SK-N-SH (cell line): ENCODE measurements at regions of chr13 and their contacts with region 1.

Region 1: DNA sequence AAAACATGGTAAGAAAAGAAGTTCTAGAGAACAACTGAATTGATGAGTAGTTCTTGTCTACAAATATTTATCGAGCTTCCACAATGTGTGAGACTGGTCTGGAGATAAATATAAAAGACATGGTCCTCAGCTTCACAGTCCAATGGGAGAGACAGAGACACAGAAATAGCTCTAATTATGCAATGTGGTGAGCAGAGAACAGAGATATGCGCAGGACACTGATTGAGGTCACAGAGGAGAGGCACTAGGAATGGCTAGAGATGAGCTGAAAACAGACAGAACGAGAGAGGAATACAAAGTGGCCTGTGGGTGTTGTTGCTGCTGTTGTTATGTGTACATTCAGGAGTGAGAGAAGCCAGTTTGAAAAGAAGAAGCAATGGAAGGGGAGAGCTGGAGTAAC is 53.2 kb downstream of the GPALPP1 start:
- DNase-seq: no peak
- H3K4me3 ChIP-seq: no peak overlapping the region
- H3K27ac ChIP-seq: no peak overlapping the region
- H3K4me1 ChIP-seq: peaks cover 0 to 1% of the 10 kb centered on the region in 2 experiments; a peak in 1 of 4 replicates
- H3K27me3 ChIP-seq: no peaks in the 10 kb centered on the region
- CTCF ChIP-seq: no peak
- EP300 ChIP-seq: no peak
- RAD21 ChIP-seq: no peak

Region 2: GRCh38 chr13:45074721-45075120 is 32.2 kb after region 1 on chr13:
- CTCF ChIA-PET with region 1: no interaction called
- POLR2A ChIA-PET with region 1: no interaction called
- DNase-seq: no peak
- H3K4me3 ChIP-seq: no peak overlapping the region
- H3K27ac ChIP-seq: no peak overlapping the region
- H3K4me1 ChIP-seq: no peaks in the 10 kb centered on the region; a peak in 1 of 4 replicates
- H3K27me3 ChIP-seq: no peaks in the 10 kb centered on the region
- CTCF ChIP-seq: no peak
- EP300 ChIP-seq: no peak
- RAD21 ChIP-seq: no peak

Region 3: DNA sequence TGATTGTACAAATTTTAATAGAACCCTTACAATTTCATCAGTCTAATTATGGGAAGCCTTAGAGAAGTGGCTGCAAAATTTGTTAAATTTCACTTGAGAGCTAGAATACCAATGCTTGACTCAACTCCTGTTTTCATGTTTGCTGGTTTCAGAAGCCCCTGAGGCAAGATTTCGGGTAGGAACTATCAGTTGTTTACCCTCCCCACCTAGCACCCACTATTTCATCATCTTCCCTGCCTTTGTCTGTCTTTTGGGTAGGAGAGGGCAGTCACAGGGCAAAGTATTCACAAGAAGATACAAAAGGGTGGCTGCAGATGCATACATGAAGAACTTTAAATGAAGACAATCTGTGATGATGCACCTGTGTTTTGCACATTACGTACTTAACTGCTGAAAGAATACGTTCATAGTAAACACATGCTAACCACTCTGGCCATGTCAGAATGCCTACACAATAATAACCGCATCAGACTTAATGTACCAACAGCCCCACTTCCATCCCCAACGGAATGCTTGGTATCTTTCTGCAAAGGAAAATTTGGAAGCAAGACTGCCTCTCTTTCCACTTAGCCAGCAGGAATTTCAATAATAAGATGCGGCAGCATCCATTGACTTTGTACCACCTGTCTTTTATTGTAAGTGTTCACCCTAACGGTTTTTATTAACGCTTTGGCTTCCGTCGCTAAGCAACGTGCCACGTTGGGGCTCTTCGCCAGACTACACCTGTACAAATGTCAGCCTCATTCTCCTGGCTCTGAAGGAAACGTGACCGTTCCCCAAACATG is 268.0 kb after region 1 on chr13:
- CTCF ChIA-PET with region 1: interaction called, 78 read pairs
- POLR2A ChIA-PET with region 1: no interaction called
- DNase-seq: no peak
- H3K4me3 ChIP-seq: peak overlapping the region; percentile 34 to 46
- H3K27ac ChIP-seq: no peak overlapping the region
- H3K4me1 ChIP-seq: peaks cover 0 to 8% of the 10 kb centered on the region in 2 experiments; a peak in 1 of 4 replicates
- H3K27me3 ChIP-seq: no peaks in the 10 kb centered on the region
- CTCF ChIP-seq: no peak
- EP300 ChIP-seq: no peak
- RAD21 ChIP-seq: no peak